ENCODE measurements at regions of chr6 and their contacts with region 1.

Region 1: GRCh38 chr6:22828179-22829062 is 259.1 kb downstream of the HDGFL1 start:
- DNase-seq: peak; percentile 99
- H3K4me3 ChIP-seq: peak overlapping the region in 1 of 3 experiments; percentile 36
- H3K27ac ChIP-seq: peak overlapping the region; percentile 96
- H3K4me1 ChIP-seq: peaks cover 31% of the 10 kb centered on the region
- H3K27me3 ChIP-seq: no peaks in the 10 kb centered on the region
- CTCF ChIP-seq: peak; percentile 85 to 95
- POLR2A ChIP-seq: no peak

Region 2: DNA sequence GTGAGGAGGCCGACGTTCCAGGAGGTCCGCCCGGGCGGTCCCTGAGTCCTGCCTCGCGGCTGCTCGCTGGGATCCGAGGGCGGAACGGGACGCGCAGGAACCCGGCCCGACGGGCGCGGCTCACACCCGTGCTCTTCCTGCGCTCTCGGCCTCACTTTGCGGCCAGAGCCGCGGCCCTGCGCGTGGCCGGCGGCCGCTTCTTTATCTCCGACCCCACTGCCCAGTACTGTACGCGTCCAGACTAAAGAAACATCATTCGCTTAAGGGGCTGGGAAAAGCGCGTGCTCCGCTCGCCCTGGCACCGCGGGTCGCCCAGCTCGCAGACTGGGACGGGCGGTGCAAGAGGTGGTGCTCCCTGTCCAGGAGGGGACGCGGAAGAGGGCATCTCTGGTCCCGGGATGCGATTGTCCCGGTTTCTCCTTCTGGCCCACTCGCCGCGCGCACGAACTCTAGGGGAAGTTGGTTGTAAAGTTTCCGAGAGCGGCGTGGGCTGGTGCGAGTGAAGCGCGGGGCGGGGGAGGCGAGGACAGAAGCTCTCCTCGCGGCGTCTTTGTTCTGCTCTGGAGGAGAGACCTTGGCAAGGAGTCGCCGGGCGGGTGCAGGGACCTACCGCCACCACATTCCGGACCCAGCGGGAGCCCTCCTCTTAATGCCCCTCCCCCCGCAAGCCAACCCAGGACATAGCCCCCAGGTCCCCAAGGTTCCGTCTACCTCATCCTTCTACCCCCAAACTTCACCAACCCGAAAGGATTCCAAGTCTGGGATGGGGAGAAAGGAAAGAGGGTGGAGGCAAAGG is 1163.9 kb before region 1 on chr6:
- CTCF ChIA-PET with region 1: no interaction called
- POLR2A ChIA-PET with region 1: no interaction called
- dilution Hi-C with region 1: no loop called
- intact Hi-C with region 1: loop called (anchors 10 kb)
- DNase-seq: peak; percentile 61
- H3K4me3 ChIP-seq: peak overlapping the region; percentile 47 to 59 (median 55)
- H3K27ac ChIP-seq: peak overlapping the region; percentile 22
- H3K4me1 ChIP-seq: peaks cover 24% of the 10 kb centered on the region
- H3K27me3 ChIP-seq: no peaks in the 10 kb centered on the region
- CTCF ChIP-seq: no peak
- POLR2A ChIP-seq: no peak

Region 3: DNA sequence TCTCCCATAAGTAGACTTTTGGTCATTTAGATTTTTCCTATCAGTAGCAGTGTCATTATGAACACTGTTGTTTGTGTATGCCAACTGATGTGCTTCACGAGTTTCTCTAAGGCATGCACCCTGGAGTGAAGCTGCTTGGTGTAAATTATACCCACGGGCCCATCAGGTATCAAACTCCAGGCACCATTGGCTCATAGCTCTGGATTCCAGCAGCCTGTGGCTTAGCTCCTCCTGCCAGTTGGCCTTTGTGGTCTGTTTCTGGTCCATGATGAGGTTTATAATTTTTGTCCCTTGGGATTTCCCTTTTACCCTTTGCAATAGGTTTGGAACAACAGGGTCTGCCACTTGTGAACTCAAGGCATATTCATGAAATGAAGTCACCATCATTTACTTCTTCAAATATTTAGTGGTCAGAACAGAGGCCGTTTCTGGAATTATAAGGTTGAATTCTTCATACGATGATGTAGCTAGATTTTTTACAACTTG is 882.1 kb before region 1 on chr6:
- CTCF ChIA-PET with region 1: no interaction called
- POLR2A ChIA-PET with region 1: no interaction called
- dilution Hi-C with region 1: no loop called
- intact Hi-C with region 1: loop called (anchors 2 kb)
- DNase-seq: no peak
- H3K4me3 ChIP-seq: no peak overlapping the region
- H3K27ac ChIP-seq: no peak overlapping the region
- H3K4me1 ChIP-seq: peaks cover 51% of the 10 kb centered on the region
- H3K27me3 ChIP-seq: no peaks in the 10 kb centered on the region
- CTCF ChIP-seq: no peak
- POLR2A ChIP-seq: no peak

Region 4: GRCh38 chr6:22227824-22228610 is 600.4 kb before region 1 on chr6:
- CTCF ChIA-PET with region 1: no interaction called
- POLR2A ChIA-PET with region 1: no interaction called
- dilution Hi-C with region 1: no loop called
- intact Hi-C with region 1: loop called (anchors 1 kb)
- DNase-seq: peak; percentile 84
- H3K4me3 ChIP-seq: no peak overlapping the region
- H3K27ac ChIP-seq: no peak overlapping the region
- H3K4me1 ChIP-seq: peaks cover 7% of the 10 kb centered on the region
- H3K27me3 ChIP-seq: peaks cover 0 to 2% of the 10 kb centered on the region in 2 experiments
- CTCF ChIP-seq: no peak
- POLR2A ChIP-seq: no peak

Region 5: DNA sequence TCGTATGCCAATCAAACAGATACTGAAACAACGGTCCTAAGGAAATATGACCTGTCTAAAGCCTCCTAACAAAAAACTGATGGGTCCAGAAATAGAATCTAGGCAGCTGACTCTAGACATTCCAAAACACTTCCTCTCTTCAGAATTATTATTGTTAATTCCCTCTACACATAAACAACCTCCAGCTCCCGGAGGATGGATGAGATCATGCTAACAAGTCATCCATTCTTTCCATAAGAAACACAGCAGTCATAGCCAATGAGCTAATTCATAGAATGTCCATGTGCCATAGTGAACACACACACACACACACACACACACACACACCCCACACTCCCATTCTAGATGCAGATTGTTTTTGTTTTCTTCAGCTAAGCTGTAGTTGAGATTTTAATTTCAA is 214.7 kb before region 1 on chr6:
- CTCF ChIA-PET with region 1: no interaction called
- POLR2A ChIA-PET with region 1: no interaction called
- dilution Hi-C with region 1: no loop called
- intact Hi-C with region 1: loop called (anchors 1 kb)
- DNase-seq: peak; percentile 96
- H3K4me3 ChIP-seq: no peak overlapping the region
- H3K27ac ChIP-seq: peak overlapping the region; percentile 53
- H3K4me1 ChIP-seq: peaks cover 12% of the 10 kb centered on the region
- H3K27me3 ChIP-seq: no peaks in the 10 kb centered on the region
- CTCF ChIP-seq: no peak
- POLR2A ChIP-seq: no peak

Region 6: DNA sequence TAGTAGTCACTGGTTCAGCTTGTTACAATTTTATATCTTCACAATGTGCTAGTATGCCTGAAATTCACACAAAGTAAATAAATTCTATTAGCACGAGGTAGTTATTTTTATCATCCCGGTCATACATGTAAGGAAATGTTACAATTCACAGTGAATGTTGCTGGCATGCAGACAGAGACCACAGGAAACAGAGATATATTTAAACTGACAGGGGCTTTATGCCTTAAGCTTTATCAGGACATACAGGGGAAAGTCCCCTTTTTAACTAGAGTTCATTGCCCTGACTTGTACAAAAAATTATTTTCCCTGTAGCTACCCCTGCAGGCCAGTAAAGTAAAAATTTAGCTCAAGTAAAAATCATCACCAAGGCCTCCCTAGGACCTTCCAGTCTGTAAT is 585.6 kb after region 1 on chr6:
- CTCF ChIA-PET with region 1: interaction called, 3 read pairs
- POLR2A ChIA-PET with region 1: no interaction called
- dilution Hi-C with region 1: no loop called
- intact Hi-C with region 1: loop called (anchors 1 kb)
- DNase-seq: peak; percentile 91
- H3K4me3 ChIP-seq: no peak overlapping the region
- H3K27ac ChIP-seq: no peak overlapping the region
- H3K4me1 ChIP-seq: peaks cover 6% of the 10 kb centered on the region
- H3K27me3 ChIP-seq: no peaks in the 10 kb centered on the region
- CTCF ChIP-seq: peak in 1 of 2 donors; percentile 29
- POLR2A ChIP-seq: no peak

Measured in endothelial cell of umbilical vein (primary cell).